Sigmoid colon (tissue), 7 donors: ENCODE measurements at regions of chr7 and their contacts with region 1.

Region 1: DNA sequence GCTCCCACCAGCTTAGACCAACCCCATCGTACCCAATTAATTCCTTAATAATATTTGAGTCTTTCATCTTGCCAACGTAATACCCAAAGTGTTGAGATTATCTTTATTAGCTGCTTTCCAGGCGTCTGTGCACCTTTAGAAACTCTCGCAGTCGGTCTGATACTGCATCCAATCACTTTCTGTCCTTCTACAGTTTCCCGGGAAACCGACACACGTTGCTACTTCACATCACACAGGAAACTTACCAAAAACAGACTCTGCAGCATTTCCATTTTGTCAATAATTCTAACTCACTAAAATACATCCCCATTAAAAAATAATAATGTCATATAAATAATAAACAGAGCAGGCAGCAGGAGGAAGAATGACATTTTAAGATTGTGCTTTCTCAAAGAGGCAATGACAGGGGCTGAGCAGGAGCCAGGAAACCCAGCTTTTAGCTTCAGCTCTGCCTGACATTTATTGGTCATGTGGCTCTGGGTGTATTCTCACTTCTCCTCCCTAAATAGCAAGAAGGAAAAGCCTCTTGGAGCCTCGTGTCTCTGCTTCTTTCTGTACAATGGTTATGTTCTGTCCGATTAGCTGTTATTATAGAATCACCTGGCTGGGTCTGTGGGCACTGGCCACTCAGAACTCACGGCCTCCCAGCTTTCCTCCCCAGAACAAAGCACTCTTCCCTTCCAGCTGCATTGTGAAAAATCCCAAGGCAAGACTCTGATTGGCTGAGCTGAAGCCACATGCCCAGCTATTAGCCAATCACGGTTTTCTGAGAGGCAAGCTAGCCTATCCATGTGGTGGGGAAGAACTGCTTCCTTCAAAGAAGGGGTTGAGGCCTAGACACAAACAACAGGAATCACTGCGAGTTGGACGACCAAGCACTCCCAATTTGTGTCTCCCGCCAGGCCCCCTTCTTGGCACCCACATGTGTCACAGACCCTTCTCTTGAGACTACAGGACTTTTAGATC is 424.7 kb upstream of the FOXK1 start:
- DNase-seq: no peak
- H3K4me3 ChIP-seq: peak overlapping the region in 1 of 4 donors; percentile 7
- H3K27ac ChIP-seq: peak overlapping the region in 3 of 4 donors; percentile 71 to 84 (median 75)
- H3K4me1 ChIP-seq: peaks cover 0 to 38% (median 28%) of the 10 kb centered on the region in 4 donors
- H3K27me3 ChIP-seq: no peaks in the 10 kb centered on the region
- CTCF ChIP-seq: no peak
- EP300 ChIP-seq: peak in 2 of 4 donors; percentile 22 to 40
- POLR2A ChIP-seq: no peak

Region 2: GRCh38 chr7:4189131-4189570 is 68.3 kb before region 1 on chr7:
- intact Hi-C with region 1: loop called (anchors 2 kb)
- DNase-seq: peak; percentile 97
- H3K4me3 ChIP-seq: peak overlapping the region in 3 of 4 donors; percentile 6 to 28 (median 16)
- H3K27ac ChIP-seq: peak overlapping the region; percentile 24 to 85 (median 78)
- H3K4me1 ChIP-seq: peaks cover 0 to 60% (median 38%) of the 10 kb centered on the region in 4 donors
- H3K27me3 ChIP-seq: no peaks in the 10 kb centered on the region
- CTCF ChIP-seq: no peak
- EP300 ChIP-seq: peak in 3 of 4 donors; percentile 71 to 88 (median 86)
- POLR2A ChIP-seq: no peak